IMR-90 (cell line): ENCODE measurements at regions of chr6 and their contacts with region 1.

Region 1: GRCh38 chr6:106502559-106502958 is 126.7 kb downstream of the RTN4IP1 start:
- DNase-seq: no peak
- ATAC-seq: no peak
- H3K4me3 ChIP-seq: no peak overlapping the region
- H3K27ac ChIP-seq: no peak overlapping the region
- H3K4me1 ChIP-seq: no peaks in the 10 kb centered on the region
- H3K27me3 ChIP-seq: peaks cover 18% of the 10 kb centered on the region
- CTCF ChIP-seq: no peak
- POLR2A ChIP-seq: no peak
- RAD21 ChIP-seq: no peak

Region 2: GRCh38 chr6:106546691-106547414 is 44.3 kb after region 1 on chr6:
- CTCF ChIA-PET with region 1: no interaction called
- POLR2A ChIA-PET with region 1: interaction called, 10 read pairs
- dilution Hi-C with region 1: no loop called
- in situ Hi-C with region 1: no loop called
- intact Hi-C with region 1: no loop called
- DNase-seq: peak; percentile 84
- ATAC-seq: peak; percentile 59
- H3K4me3 ChIP-seq: no peak overlapping the region
- H3K27ac ChIP-seq: peak overlapping the region; percentile 90; the same call in 1 of the 2 replicates
- H3K4me1 ChIP-seq: peaks cover 10% of the 10 kb centered on the region
- H3K27me3 ChIP-seq: no peaks in the 10 kb centered on the region
- CTCF ChIP-seq: no peak
- POLR2A ChIP-seq: no peak
- RAD21 ChIP-seq: no peak